Cardiac septum (tissue), 1 donor: ENCODE measurements at regions of chr6 and their contacts with region 1.

Region 1: GRCh38 chr6:136967876-136968752 is 46.0 kb downstream of the SLC35D3 start:
- DNase-seq: peak; percentile 81

Region 2: GRCh38 chr6:137013738-137014602 is 45.9 kb after region 1 on chr6:
- intact Hi-C with region 1: loop called (anchors 5 kb)
- DNase-seq: no peak